GM10248 (cell line): ENCODE measurements at regions of chr1 and their contacts with region 1.

Region 1: GRCh38 chr1:222073307-222073995 is 331.6 kb upstream of the DUSP10 start:
- DNase-seq: no peak
- CTCF ChIP-seq: no peak

Region 2: DNA sequence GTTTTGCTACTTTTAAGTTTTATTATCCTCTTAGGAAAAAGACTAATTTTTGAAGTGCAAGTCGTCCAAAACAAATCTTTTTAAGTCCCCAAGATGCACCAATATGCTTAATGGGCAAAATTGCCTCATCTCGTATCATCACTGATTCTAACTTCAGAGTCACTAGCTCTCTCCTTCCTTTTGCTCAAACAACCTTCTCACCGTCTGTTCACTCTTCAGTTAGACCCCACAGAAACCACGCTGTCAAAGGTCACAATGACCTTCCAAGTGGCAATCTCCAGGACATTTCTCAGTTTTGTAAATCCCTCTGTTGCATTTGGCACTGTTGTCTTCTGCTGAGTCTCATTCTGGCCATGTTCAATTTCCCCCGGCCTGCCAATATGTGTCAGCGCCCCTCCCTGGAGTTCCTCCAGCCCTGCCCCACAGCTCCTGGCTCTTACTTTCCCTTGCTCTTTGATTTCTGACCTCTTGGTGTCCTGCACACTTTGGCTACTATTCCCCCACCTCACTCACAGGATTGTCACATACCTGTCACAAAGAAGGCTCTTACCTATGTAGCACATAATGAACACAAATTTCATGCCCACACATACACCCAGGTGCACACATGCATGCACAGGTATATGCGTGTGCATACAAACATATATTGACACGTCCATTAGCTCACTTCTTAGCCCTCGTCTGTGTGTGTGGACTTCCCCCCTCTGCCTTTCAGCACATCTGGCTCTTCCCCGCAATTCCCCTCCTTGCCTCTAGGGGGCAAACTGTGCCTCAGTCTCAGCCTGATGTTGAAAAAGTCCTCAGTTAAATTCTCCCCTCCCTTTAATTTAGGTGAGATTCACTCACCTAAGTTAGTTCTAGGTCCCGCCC is 22.4 kb after region 1 on chr1:
- CTCF ChIA-PET with region 1: interaction called, 28 read pairs
- POLR2A ChIA-PET with region 1: no interaction called
- DNase-seq: peak; percentile 65
- CTCF ChIP-seq: peak; percentile 85